ENCODE measurements at regions of chr14 and their contacts with region 1.

Region 1: DNA sequence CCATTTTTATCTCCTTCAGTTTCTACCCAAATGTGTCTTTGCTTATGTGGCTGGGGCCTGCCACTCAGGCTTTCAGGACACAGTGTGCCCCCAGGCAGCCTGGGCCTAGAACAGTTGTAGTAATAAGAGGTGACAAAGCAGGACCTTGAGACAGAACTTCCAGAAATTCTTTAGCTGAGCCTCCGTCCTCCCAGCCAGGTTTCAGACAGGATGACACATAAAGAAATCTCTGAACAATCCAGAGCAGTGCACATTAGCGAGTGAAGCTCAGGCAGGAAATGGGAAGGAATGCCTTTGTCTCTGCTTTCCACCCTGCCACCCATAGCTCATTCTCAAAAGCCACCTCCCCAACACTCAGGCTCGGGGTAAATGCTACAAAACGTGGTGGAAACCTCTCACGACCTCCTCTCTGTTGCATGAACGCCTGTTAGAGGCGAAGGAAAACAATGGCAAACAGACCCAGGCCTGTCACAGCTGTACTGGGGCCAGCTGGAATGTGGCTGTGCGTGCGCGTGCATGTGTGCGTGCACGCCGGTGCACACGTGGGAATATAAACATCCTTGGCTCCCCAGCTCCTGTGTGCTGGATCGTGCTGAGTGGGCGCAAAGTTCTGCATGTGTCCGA is 286.7 kb downstream of the ZFP36L1 start:
- DNase-seq: peak; percentile 32
- H3K4me3 ChIP-seq: peak overlapping the region; percentile 17
- H3K27ac ChIP-seq: peak overlapping the region; percentile 86
- H3K4me1 ChIP-seq: peaks cover 55% of the 10 kb centered on the region
- CTCF ChIP-seq: no peak

Region 2: DNA sequence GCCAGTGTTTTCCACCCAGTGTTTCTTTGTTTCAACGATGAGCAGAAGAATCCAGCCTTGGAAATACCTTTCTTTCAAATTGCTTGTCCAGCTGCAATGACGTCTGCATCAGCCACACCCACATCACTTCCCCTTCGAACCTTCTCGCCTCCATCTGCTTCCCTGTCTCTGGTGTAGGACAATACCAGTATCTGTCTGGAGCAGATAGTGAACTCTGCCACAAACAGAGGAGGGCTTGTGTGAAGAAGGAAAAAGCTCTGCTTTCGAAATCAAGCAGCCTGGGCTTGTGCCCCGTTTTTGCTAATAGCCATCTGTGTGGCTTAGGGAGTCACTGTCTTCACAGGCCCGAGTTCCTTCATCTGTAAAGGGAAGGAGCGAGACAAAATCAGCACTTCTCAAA is 128.7 kb before region 1 on chr14:
- CTCF ChIA-PET with region 1: no interaction called
- POLR2A ChIA-PET with region 1: interaction called, 5 read pairs
- intact Hi-C with region 1: loop called (anchors 5 kb)
- DNase-seq: peak; percentile 56
- H3K4me3 ChIP-seq: peak overlapping the region; percentile 1
- H3K27ac ChIP-seq: peak overlapping the region; percentile 4
- H3K4me1 ChIP-seq: peaks cover 69% of the 10 kb centered on the region
- CTCF ChIP-seq: no peak

Region 3: GRCh38 chr14:68476212-68476907 is 29.8 kb before region 1 on chr14:
- CTCF ChIA-PET with region 1: no interaction called
- POLR2A ChIA-PET with region 1: interaction called, 11 read pairs
- intact Hi-C with region 1: no loop called
- DNase-seq: peak; percentile 89
- H3K4me3 ChIP-seq: peak overlapping the region; percentile 3
- H3K27ac ChIP-seq: peak overlapping the region; percentile 53
- H3K4me1 ChIP-seq: peaks cover 51% of the 10 kb centered on the region
- CTCF ChIP-seq: no peak

Region 4: GRCh38 chr14:68685419-68686204 is 179.5 kb after region 1 on chr14:
- CTCF ChIA-PET with region 1: interaction called, 4 read pairs
- POLR2A ChIA-PET with region 1: interaction called, 4 read pairs
- intact Hi-C with region 1: loop called (anchors 2 kb)
- DNase-seq: peak; percentile 98
- H3K4me3 ChIP-seq: peak overlapping the region; percentile 57
- H3K27ac ChIP-seq: peak overlapping the region; percentile 97
- H3K4me1 ChIP-seq: peaks cover 98% of the 10 kb centered on the region
- CTCF ChIP-seq: no peak